ENCODE measurements at regions of chr5 and their contacts with region 1.

Region 1: GRCh38 chr5:116892993-116893392 is 318.4 kb upstream of the SEMA6A start:
- DNase-seq: no peak
- H3K4me3 ChIP-seq: no peak overlapping the region
- H3K27ac ChIP-seq: no peak overlapping the region
- H3K4me1 ChIP-seq: no peaks in the 10 kb centered on the region
- H3K27me3 ChIP-seq: no peaks in the 10 kb centered on the region
- CTCF ChIP-seq: no peak
- EP300 ChIP-seq: no peak
- POLR2A ChIP-seq: no peak

Region 2: DNA sequence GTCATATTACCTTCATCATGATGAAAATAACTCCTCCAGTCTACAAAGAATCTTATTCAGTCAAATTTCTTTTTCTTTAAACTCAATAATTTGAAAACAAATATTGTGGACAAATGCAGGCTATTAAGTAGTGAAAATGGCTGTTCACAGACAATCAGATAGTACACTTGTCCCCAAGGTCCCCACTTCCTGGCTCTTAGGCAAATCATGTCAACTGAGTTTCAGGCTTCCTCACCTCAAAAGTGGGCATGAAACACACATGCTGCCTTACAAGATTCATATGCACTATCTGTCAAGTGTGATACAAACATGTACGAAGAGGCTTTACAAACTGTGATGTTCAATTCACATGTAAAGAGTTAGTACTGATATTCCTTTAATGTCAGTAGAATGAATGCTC is 66.8 kb after region 1 on chr5:
- in situ Hi-C with region 1: no loop called
- intact Hi-C with region 1: loop called (anchors 2 kb)
- DNase-seq: no peak
- H3K4me3 ChIP-seq: no peak overlapping the region
- H3K27ac ChIP-seq: no peak overlapping the region
- H3K4me1 ChIP-seq: no peaks in the 10 kb centered on the region
- H3K27me3 ChIP-seq: no peaks in the 10 kb centered on the region
- CTCF ChIP-seq: no peak
- EP300 ChIP-seq: no peak
- POLR2A ChIP-seq: no peak

Measured in transverse colon (tissue), 4 donors.